PC-3 (cell line): ENCODE measurements at regions of chrX and their contacts with region 1.

Region 1: DNA sequence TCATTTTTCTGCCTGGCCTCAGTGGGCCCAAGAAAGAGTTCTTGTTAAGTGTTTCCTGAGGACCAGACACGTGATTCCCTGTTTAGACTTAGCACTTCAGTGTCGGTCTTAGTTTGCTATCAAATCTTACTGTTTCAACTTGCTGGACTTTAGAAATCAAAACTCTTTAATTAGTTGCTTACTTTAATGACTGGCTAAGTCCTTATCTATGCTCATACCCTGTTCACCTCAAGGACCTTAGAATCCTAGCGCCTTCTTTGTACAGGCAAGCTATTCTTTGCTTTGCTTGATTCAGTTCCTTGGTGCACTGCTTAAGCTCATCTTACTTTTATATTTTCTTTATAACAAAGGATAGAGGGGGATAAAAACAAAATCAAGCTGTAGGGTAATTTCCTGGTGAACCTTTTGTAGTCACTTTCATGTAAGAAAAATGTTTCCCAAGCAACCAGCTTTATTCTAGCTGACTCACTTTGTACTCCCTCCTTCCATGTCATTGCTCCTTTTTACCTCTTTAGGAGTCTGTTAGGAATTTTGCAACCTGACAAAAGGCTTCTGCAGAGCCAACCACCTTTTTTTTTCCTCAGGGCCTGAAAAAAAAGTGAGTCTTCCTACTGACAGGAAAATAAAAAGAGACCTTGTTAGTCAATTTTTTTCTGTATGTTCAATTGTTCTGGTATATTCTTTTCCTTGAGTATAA is 14.7 kb downstream of the WDR44 start:
- DNase-seq: peak; percentile 31
- ATAC-seq: no peak; the same call in 1 of the 2 replicates
- H3K4me3 ChIP-seq: no peak overlapping the region
- H3K27ac ChIP-seq: no peak overlapping the region
- H3K4me1 ChIP-seq: peaks cover 14% of the 10 kb centered on the region
- H3K27me3 ChIP-seq: no peaks in the 10 kb centered on the region
- CTCF ChIP-seq: no peak

Region 2: GRCh38 chrX:118325453-118325852 is 35.1 kb before region 1 on chrX:
- CTCF ChIA-PET with region 1: no interaction called
- POLR2A ChIA-PET with region 1: no interaction called
- intact Hi-C with region 1: no loop called
- DNase-seq: peak; percentile 22
- ATAC-seq: no peak
- H3K4me3 ChIP-seq: no peak overlapping the region
- H3K27ac ChIP-seq: no peak overlapping the region
- H3K4me1 ChIP-seq: no peaks in the 10 kb centered on the region
- H3K27me3 ChIP-seq: no peaks in the 10 kb centered on the region
- CTCF ChIP-seq: peak; percentile 48

Region 3: GRCh38 chrX:118345401-118346257 is 14.9 kb before region 1 on chrX and contains the start of gene WDR44:
- CTCF ChIA-PET with region 1: interaction called, 5 read pairs
- POLR2A ChIA-PET with region 1: no interaction called
- intact Hi-C with region 1: loop called (anchors 2 kb)
- DNase-seq: peak; percentile 96
- ATAC-seq: peak; percentile 86
- H3K4me3 ChIP-seq: peak within 1 kb of the TSS; percentile 96
- H3K27ac ChIP-seq: peak within 1 kb of the TSS; percentile 100
- H3K4me1 ChIP-seq: peaks cover 20% of the 10 kb centered on the region
- H3K27me3 ChIP-seq: no peaks in the 10 kb centered on the region
- CTCF ChIP-seq: no peak
- total RNA-seq, gene WDR44: 10.5 and 16.2 TPM in 2 replicates